Breast epithelium (tissue), 4 donors: ENCODE measurements at regions of chr16 and their contacts with region 1.

Region 1: GRCh38 chr16:23716484-23716883 is 3.5 kb upstream of the ERN2 start:
- DNase-seq: no peak
- H3K4me3 ChIP-seq: no peak overlapping the region
- H3K27ac ChIP-seq: no peak overlapping the region
- H3K4me1 ChIP-seq: no peaks in the 10 kb centered on the region
- H3K27me3 ChIP-seq: peaks cover 7 to 33% of the 10 kb centered on the region in 2 donors
- CTCF ChIP-seq: no peak
- POLR2A ChIP-seq: no peak

Region 2: DNA sequence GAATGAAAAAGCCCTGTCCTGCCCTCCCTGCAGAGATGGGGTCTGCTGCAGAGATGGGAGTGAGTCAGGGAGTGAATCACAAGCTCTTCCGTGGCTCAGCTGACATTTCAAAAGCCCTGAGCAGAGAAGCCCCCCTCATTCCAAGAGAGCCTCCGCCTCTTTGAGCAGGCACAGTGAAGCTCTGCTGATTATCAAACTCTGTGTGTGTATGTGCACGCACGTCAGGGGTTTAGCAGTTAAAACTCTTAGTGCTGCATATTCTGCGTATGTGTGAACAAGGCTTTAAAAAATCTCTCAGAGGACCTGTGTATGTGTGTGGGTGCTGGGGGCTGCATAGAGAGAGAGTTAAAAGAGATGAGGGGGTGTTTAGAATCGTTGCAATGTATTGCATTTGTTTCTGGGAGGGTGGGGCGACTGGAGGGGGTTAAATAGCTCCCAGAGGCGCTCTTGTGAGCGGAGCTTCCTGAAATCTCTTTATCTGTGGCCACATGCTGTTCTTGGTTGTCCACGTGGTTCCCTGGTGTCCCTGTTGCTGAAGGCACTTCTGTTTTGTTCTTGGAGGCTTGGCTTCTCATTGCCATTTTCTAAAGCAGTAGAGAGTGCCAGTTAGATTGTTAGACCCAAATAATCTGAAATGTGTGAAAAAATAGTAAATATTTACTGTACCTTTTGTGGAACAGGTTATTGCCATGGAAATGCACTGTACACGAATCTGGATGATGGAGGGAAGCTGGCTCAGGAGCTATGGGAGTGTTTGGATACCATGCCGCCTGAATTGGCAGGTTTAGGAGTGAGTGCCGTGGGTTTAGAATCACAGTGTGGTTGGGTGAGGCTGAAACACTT is 235.9 kb after region 1 on chr16:
- intact Hi-C with region 1: loop called (anchors 5 kb)
- DNase-seq: no peak
- H3K4me3 ChIP-seq: no peak overlapping the region
- H3K27ac ChIP-seq: no peak overlapping the region
- H3K4me1 ChIP-seq: no peaks in the 10 kb centered on the region
- H3K27me3 ChIP-seq: no peaks in the 10 kb centered on the region
- CTCF ChIP-seq: no peak
- POLR2A ChIP-seq: no peak